ENCODE measurements at regions of chr5 and their contacts with region 1.

Region 1: DNA sequence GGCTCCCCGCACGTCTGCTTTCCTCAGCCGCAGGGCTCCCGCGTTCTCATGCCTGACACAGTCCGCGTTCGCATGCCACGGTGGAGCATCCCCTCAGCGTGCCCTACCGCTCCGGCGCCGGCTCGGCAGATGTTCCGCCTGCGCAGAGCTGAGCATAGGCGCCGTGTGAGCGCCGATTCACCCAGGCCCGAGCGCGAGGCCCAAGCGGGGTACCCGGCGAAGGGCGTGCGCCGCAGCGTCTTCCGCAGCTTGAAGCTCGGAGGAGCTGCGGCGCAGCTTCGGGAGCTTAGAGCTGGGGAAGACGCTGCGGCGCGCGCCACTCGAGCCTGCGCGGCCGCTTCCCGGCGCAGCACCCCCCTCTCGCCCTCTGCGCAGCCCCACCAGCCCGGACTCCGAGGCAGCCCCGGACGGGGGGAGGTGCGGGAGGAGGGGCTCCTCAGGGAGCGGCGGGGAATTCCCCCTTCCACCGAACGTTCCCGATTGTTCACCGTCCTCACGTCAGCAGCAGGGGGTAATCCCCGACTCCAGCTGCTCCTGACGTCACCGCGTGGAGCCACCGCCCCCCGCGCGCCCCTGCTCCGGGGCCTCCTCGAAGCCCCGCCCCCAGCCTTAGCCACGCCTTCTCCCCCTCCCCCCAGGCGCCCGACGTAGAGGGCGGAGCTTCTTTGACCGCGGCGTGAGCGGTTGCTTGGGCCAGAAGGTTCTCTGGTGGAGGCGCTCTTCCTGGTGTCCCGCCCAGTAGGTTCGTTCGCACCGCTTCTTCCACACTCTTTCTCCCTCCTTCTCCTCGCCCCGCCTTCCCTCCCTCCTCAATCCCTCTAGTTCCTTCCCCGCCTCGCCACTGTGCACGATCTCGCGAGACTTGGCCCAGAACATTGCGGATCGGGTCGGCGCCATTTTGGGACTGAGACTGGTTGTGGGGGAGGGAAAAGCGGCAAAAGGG is at the start of gene GPBP1:
- DNase-seq: peak; percentile 98
- ATAC-seq: peak; percentile 73
- H3K4me3 Mint-ChIP-seq: peak within 1 kb of the TSS; percentile 95
- H3K27ac Mint-ChIP-seq: peak within 1 kb of the TSS; percentile 97
- H3K4me1 Mint-ChIP-seq: peaks cover 40% of the 10 kb centered on the region
- H3K27me3 Mint-ChIP-seq: no peaks in the 10 kb centered on the region
- CTCF ChIP-seq: no peak
- total RNA-seq, gene GPBP1: 130 and 142 TPM in 2 replicates

Region 2: GRCh38 chr5:55172051-55172899 is 2001.2 kb before region 1 on chr5:
- CTCF ChIA-PET with region 1: no interaction called
- POLR2A ChIA-PET with region 1: no interaction called
- intact Hi-C with region 1: loop called (anchors 2 kb)
- DNase-seq: no peak
- ATAC-seq: peak; percentile 53
- H3K4me3 Mint-ChIP-seq: peak overlapping the region; percentile 88
- H3K27ac Mint-ChIP-seq: no peak overlapping the region
- H3K4me1 Mint-ChIP-seq: peaks cover 33% of the 10 kb centered on the region
- H3K27me3 Mint-ChIP-seq: peaks cover 51% of the 10 kb centered on the region
- CTCF ChIP-seq: peak; percentile 88

Region 3: DNA sequence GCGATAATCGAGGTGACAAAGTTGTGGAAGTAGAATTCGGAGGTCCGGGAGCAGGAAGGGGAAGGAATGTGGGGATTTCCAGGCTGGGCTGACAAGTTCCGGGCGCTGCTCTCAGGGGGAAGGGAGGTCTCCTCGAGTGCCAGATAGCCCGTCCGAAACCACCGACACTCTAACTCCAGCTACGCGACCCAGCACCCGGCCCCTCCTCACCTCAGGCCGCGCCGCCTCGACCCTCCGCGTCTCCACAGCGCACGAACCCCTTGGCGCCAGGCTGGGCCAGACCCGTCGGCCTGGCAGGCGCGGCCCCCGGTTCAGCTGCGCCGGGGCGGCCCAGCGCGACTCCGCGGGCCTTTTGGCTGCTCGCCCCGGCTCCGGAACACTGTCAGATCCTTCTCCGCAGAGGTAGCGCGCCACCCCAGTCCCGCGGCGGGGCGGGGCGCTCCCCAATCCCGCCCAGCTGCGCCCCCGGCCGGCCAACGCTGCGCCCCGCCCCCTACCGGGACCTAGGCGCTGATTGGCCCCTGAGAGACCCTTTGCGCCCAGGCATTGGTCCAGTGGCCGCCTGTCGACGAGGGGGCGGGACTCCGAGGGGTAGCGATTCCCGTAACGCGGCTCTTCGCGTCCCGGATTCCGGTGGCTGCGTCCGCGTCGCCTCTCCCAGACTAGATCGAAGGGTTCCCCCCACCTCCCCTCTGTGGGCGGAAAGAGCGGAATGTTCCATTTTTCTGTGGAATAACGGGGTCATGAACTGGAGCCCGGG is 1178.7 kb before region 1 on chr5 and contains the start of gene IL6ST:
- CTCF ChIA-PET with region 1: no interaction called
- POLR2A ChIA-PET with region 1: interaction called, 7 read pairs
- intact Hi-C with region 1: loop called (anchors 1 kb)
- DNase-seq: peak; percentile 95
- ATAC-seq: peak; percentile 92
- H3K4me3 Mint-ChIP-seq: peak within 1 kb of the TSS; percentile 96
- H3K27ac Mint-ChIP-seq: peak within 1 kb of the TSS; percentile 95
- H3K4me1 Mint-ChIP-seq: peaks cover 38% of the 10 kb centered on the region
- H3K27me3 Mint-ChIP-seq: peaks cover 5% of the 10 kb centered on the region
- CTCF ChIP-seq: no peak
- total RNA-seq, gene IL6ST: 39.8 and 48.3 TPM in 2 replicates

Region 4: DNA sequence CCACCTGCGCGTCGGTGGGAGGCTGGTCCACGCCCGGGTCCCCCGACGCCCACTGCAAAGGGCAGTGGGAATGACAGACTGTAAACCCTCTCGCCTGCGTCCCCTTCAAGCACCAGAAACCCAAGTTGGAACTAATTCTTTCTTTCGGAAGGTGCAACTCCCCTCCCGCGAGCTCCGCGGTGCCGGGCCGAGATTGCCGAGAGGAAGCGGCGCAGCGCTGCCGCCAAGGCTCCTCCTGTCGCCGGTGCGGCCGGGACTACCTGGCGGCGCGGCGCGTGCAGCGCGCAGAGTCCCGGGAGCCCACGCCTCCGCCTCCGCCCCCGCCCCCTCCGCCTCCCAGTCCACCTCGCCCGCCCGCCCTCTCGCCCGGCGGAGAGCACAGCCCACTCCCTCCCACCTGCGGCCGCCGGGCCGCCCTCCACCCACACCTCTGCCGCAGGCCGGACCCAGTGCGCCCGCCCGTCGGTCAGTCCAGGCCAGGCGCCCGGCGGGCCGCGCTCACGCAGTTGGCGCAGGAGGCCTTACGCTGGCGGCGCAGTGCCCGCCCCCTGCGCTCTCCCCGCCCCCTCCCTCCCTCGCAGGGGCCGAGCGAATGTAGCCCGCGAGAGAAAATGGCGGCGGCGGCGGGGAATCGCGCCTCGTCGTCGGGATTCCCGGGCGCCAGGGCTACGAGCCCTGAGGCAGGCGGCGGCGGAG is 358.3 kb before region 1 on chr5 and contains the start of gene MAP3K1:
- CTCF ChIA-PET with region 1: no interaction called
- POLR2A ChIA-PET with region 1: interaction called, 3 read pairs
- intact Hi-C with region 1: loop called (anchors 1 kb)
- DNase-seq: peak; percentile 86
- ATAC-seq: peak; percentile 63
- H3K4me3 Mint-ChIP-seq: peak within 1 kb of the TSS; percentile 93
- H3K27ac Mint-ChIP-seq: peak within 1 kb of the TSS; percentile 93
- H3K4me1 Mint-ChIP-seq: peaks cover 50% of the 10 kb centered on the region
- H3K27me3 Mint-ChIP-seq: no peaks in the 10 kb centered on the region
- CTCF ChIP-seq: no peak
- total RNA-seq, gene MAP3K1: 92.8 and 102 TPM in 2 replicates

Region 5: DNA sequence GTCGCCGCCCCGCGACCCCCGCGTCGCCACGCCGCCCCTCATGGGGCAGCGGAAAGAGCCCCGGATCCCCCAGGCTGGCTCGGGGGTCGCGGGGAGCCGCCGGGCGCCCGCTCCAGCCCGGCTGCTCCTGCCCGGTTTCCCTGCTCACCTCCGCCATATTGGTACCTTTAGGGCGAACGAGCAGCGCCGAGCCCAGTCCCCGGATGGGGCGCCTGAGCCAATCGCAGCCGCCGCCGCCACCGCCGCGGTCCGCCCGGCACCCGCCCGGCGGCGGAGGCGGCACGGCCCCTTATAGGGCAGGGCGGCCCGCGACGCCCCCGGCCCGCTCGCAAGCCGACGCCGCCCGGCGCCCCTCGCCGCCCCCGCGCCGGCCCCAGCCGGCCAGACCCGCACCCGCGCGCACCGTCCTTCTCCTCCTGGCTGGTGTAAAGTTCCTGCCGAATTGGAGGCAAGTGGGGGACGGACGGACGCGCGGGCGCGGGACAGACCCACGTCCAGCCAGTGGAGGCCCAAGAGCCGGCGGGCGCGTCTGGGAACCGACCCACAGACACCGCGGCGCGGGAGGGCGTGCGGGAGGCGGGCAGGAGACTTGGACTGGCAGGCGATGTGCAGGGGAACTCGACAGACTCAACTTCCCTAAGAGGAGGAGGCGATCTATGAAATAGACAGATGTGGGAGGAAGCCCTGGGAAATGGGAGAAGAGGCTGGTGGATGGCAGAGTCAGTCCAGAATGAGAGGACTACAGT is 221.3 kb before region 1 on chr5 and contains the start of gene MIER3:
- CTCF ChIA-PET with region 1: no interaction called
- POLR2A ChIA-PET with region 1: interaction called, 10 read pairs
- intact Hi-C with region 1: loop called (anchors 1 kb)
- DNase-seq: peak; percentile 75
- ATAC-seq: peak; percentile 96
- H3K4me3 Mint-ChIP-seq: peak within 1 kb of the TSS; percentile 95
- H3K27ac Mint-ChIP-seq: peak within 1 kb of the TSS; percentile 80
- H3K4me1 Mint-ChIP-seq: peaks cover 20% of the 10 kb centered on the region
- H3K27me3 Mint-ChIP-seq: peaks cover 7% of the 10 kb centered on the region
- CTCF ChIP-seq: no peak
- total RNA-seq, gene MIER3: 22.2 and 23.5 TPM in 2 replicates

Region 6: GRCh38 chr5:57067597-57067924 is 105.9 kb before region 1 on chr5:
- CTCF ChIA-PET with region 1: no interaction called
- POLR2A ChIA-PET with region 1: no interaction called
- intact Hi-C with region 1: no loop called
- DNase-seq: no peak
- ATAC-seq: no peak
- H3K4me3 Mint-ChIP-seq: no peak overlapping the region
- H3K27ac Mint-ChIP-seq: no peak overlapping the region
- H3K4me1 Mint-ChIP-seq: no peaks in the 10 kb centered on the region
- H3K27me3 Mint-ChIP-seq: peaks cover 14% of the 10 kb centered on the region
- CTCF ChIP-seq: no peak

Region 7: GRCh38 chr5:57082441-57083067 is 90.9 kb before region 1 on chr5:
- CTCF ChIA-PET with region 1: no interaction called
- POLR2A ChIA-PET with region 1: no interaction called
- intact Hi-C with region 1: no loop called
- DNase-seq: no peak
- ATAC-seq: no peak
- H3K4me3 Mint-ChIP-seq: no peak overlapping the region
- H3K27ac Mint-ChIP-seq: no peak overlapping the region
- H3K4me1 Mint-ChIP-seq: no peaks in the 10 kb centered on the region
- H3K27me3 Mint-ChIP-seq: peaks cover 10% of the 10 kb centered on the region
- CTCF ChIP-seq: no peak

Region 8: DNA sequence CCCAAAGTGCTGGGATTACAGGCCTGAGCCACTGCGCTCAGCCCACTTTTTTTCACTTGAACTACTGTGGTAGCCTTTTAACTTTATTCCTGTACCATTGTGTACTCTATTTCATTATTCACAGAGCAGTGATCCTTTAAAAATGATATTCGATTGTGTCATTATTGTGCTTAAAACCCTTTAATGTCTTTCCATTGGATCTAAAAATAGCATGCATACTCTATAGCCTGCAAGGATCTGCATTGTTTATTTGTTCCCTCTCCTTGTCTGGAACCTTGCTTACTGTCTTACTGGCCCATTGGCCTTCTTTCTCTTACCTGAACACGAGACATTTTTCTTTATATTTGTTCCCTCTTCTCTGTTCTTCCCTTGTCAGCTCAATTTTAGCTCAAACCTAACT is 16.1 kb after region 1 on chr5:
- CTCF ChIA-PET with region 1: no interaction called
- POLR2A ChIA-PET with region 1: interaction called, 11 read pairs
- intact Hi-C with region 1: loop called (anchors 2 kb)
- DNase-seq: no peak
- ATAC-seq: no peak
- H3K4me3 Mint-ChIP-seq: no peak overlapping the region
- H3K27ac Mint-ChIP-seq: no peak overlapping the region
- H3K4me1 Mint-ChIP-seq: peaks cover 88% of the 10 kb centered on the region
- H3K27me3 Mint-ChIP-seq: no peaks in the 10 kb centered on the region
- CTCF ChIP-seq: no peak

Region 9: DNA sequence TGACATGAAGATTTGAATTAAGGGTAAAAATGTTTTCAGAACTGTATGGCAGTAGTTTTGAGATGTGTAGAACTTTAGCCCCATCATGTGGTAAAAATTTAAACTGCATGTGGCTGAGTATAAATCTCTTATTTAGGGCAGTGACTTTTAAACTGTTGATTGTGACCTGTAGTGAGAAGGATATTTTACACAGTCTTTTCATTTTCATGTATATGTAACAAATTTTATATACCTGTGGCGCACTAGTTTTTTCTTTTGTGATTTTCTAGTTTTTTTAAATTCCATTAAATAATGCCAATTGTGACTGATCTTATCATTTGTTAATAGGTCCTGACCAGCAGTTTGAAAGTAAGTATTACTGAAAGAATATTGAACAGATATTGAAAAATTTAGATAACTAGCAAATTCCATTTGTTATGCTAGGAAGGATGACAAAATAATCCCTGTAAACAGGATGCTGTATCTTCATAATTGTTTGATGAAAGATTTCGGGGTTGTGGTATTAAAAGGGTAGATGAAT is 47.7 kb after region 1 on chr5:
- CTCF ChIA-PET with region 1: interaction called, 3 read pairs
- POLR2A ChIA-PET with region 1: interaction called, 8 read pairs
- intact Hi-C with region 1: loop called (anchors 2 kb)
- DNase-seq: no peak
- ATAC-seq: peak; percentile 86
- H3K4me3 Mint-ChIP-seq: no peak overlapping the region
- H3K27ac Mint-ChIP-seq: no peak overlapping the region
- H3K4me1 Mint-ChIP-seq: peaks cover 34% of the 10 kb centered on the region
- H3K27me3 Mint-ChIP-seq: no peaks in the 10 kb centered on the region
- CTCF ChIP-seq: peak; percentile 22